ENCODE measurements at regions of chr11 and their contacts with region 1.

Region 1: DNA sequence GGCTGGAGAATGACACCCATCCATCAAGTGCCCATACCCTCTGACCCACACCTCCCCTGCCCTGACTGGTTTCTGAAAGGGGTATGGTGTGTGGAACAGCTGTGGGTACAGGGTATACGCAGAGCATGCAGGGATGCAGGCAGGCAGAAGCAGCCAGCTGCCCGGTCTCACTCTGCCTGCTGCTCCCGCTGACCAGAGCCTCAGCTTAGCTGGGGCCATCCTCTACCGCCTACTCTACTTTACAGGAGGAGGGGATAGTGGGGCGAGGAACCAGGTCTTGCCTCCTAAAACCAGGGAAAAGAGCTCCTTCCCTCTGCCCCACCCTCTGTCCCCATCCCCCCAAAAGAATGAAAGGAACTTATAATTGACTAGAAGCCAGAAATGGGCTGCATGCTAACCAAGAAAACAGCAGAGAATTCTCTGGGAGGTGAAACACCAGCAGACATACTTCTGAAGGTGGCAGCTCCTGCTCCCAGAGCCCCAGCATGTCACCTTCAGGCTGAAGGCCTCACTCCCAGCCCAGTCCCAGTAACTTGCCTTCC is 13.0 kb upstream of the CHRM4 start:
- DNase-seq: no peak
- ATAC-seq: no peak
- H3K4me3 ChIP-seq: no peak overlapping the region
- H3K27ac ChIP-seq: no peak overlapping the region
- H3K4me1 ChIP-seq: no peaks in the 10 kb centered on the region
- H3K27me3 ChIP-seq: no peaks in the 10 kb centered on the region

Region 2: GRCh38 chr11:46461461-46461927 is 56.9 kb after region 1 on chr11:
- intact Hi-C with region 1: loop called in 1 of 2 experiments (anchors 10 kb)
- DNase-seq: no peak
- ATAC-seq: no peak
- H3K4me3 ChIP-seq: no peak overlapping the region
- H3K27ac ChIP-seq: no peak overlapping the region
- H3K4me1 ChIP-seq: peaks cover 0 to 6% of the 10 kb centered on the region in 2 donors
- H3K27me3 ChIP-seq: no peaks in the 10 kb centered on the region